ENCODE measurements at regions of chr4 and their contacts with region 1.

Region 1: DNA sequence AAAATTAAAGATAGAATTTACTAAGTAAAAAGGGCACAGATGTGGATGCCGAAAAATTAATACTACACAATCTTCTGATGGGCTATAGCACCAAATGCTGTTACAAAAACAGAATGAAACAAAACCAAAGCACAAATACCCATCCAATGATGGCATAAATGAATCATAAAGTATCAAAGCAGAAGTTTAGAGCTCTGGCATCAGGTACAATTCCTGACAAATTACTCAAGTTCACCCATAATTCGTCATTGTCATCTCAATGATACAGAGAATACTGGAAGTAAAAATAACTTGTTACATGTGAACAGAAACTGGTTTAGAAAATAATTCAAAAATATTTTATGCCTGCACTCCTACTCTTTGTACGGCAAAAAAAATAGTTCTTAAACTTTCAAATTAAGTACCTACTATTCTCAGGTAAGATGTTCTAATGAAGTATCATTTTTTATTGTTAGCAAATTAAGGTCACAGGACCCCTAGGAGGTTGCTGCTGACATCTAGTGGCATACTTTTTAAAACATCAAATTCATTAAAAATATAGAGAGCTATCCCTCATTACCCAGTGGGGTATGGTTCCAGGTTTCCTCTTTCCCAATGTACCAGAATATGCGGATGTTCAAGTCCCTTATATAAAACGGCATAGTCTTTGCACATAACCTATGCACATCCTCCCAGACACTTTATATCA is 126.1 kb downstream of the INPP4B start:
- DNase-seq: no peak
- H3K4me3 Mint-ChIP-seq: no peak overlapping the region
- H3K27ac Mint-ChIP-seq: peak overlapping the region; percentile 84
- H3K4me1 Mint-ChIP-seq: peaks cover 42% of the 10 kb centered on the region
- H3K27me3 Mint-ChIP-seq: no peaks in the 10 kb centered on the region

Region 2: DNA sequence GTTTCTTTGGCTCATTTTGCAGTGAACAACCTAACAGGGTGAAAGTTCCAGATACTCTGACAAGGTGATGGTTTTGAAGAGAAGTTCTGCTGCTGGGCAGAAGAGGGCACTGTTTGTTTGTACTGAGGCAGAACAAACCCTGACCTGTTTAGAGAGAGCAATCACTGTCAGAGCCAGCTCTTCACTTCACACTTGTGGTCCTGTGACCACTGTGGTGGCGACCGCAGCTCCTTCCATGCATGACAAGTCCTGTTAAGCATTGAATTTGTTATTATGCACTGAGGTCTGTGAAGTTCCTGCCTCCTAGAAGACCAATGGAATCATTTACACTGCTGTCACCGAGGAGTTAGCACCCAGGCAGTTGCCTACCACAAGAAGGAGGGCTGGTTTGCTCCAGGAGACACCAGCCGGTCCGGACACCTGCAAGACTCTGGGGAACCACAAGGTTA is 1412.7 kb before region 1 on chr4:
- CTCF ChIA-PET with region 1: no interaction called
- intact Hi-C with region 1: loop called (anchors 5 kb)
- DNase-seq: peak; percentile 74
- H3K4me3 Mint-ChIP-seq: no peak overlapping the region
- H3K27ac Mint-ChIP-seq: no peak overlapping the region
- H3K4me1 Mint-ChIP-seq: peaks cover 2% of the 10 kb centered on the region
- H3K27me3 Mint-ChIP-seq: peaks cover 6% of the 10 kb centered on the region

Region 3: DNA sequence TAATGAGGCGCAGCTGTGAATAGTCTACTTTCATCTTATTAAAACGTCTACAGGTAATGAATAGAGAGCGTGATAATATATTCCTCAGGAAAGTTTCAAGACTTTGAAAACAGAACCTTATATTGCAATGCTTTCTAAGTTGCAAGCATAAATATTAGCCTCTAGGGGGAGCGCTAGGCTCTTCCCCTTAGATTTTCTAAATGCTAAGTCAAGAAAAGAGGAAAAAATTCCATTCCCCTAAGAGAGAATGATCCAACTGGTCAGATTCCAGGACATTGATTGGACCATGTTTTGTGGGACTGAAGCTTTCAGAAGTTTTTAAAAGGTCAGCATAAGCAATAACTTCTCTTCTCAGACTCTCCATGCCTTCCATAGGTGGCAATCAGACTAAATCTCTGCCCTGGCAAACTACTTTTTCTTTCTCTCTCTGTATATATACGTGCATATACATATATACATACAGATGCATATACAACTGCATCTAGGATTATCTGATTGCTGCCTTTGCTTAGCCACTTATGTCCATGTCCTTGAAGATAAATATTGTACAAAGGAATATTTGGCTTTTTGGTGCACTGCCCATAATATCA is 366.8 kb before region 1 on chr4:
- CTCF ChIA-PET with region 1: interaction called, 3 read pairs
- intact Hi-C with region 1: loop called (anchors 1 kb)
- DNase-seq: no peak
- H3K4me3 Mint-ChIP-seq: peak overlapping the region; percentile 48
- H3K27ac Mint-ChIP-seq: peak overlapping the region; percentile 90
- H3K4me1 Mint-ChIP-seq: peaks cover 94% of the 10 kb centered on the region
- H3K27me3 Mint-ChIP-seq: no peaks in the 10 kb centered on the region

Region 4: DNA sequence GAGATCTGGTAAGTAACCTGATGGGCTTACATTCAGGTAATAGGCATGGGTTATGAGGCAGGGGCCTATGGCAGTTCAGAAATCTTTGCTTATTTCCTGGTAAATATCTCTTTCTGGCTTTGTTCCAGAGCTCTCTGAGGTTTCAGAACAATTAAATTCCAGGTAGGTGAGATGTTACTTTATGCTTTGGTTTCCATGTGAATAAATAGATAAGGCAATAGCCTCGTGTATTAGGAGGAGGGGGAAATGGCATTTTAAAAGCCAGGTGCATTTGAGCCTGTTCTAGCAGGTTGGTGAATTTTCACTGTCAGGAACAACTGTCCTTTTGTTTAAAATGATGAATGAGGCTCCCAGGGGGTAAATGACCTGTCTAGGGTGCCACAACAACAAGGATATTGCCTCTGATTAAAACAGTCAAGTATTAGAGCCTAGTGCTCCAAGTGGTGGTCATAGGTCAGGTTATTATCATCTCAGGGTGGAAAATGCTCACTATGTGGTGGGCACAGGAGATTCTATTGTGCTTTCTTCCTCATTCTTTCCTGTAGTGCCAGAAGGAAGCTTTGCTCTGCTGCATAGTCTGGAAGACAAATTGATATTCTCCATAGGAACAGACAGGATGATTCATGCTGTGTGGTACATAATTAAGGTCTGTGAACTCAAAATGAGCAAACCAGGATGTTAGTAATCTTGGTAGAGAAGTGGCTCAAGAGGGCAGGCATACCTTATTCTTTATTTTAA is 170.1 kb before region 1 on chr4:
- CTCF ChIA-PET with region 1: interaction called, 3 read pairs
- intact Hi-C with region 1: loop called (anchors 1 kb)
- DNase-seq: no peak
- H3K4me3 Mint-ChIP-seq: no peak overlapping the region
- H3K27ac Mint-ChIP-seq: peak overlapping the region; percentile 60
- H3K4me1 Mint-ChIP-seq: peaks cover 71% of the 10 kb centered on the region
- H3K27me3 Mint-ChIP-seq: no peaks in the 10 kb centered on the region

Region 5: GRCh38 chr4:142824368-142824767 is 104.4 kb after region 1 on chr4:
- CTCF ChIA-PET with region 1: no interaction called
- intact Hi-C with region 1: loop called (anchors 1 kb)
- DNase-seq: no peak
- H3K4me3 Mint-ChIP-seq: peak overlapping the region; percentile 5
- H3K27ac Mint-ChIP-seq: peak overlapping the region; percentile 86
- H3K4me1 Mint-ChIP-seq: peaks cover 18% of the 10 kb centered on the region
- H3K27me3 Mint-ChIP-seq: no peaks in the 10 kb centered on the region

Measured in activated naive CD4-positive, alpha-beta T cell treated with anti-CD3 and anti-CD28 coated beads for 36 hours (primary cell).